ENCODE measurements at regions of chr19 and their contacts with region 1.

Region 1: DNA sequence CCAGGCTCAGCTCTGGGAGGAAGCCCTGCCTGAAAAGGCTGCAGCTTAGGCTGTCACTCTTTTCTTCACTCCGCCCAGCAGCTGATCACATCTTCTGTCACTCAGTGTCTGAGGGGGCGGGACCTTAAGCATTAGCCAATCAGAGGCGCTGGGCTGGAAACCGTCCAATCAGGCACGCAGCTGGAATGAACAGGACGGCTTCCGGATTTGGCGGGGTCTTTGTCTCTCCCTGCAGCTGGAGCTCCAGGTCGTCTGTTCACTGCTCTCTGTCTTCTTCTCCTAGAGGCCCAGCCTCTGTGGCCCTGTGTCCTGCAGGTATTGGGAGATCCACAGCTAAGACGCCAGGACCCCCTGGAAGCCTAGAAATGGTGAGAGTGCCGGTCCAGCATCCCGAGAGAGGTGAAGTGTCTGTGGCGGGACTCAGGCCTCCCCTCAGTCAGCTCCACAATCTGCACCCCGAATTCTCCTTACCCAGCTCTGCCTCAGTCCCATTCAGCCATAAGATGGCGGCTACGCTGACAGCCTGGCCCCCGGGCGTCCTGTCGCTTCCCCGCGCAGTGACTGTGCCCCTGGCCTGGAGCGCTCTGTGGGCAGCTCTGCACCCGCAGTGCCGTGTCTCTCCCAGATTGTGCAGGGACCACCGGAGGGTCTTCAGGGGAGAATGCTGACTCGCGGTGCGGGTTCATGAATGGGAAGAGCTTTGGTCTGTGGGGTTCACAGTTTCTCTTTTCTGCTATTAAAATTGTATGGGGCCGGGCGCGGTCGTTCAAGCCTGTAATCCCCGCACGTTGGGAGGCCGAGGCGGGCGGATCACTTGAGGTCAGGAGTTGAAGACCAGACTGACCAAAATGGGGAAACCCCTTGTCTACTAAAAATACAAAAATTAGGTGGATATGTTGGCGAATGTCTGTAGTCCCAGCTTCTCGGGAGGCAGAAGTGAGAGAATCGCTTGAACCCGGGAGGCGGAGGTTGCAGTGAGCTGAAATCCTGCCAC is at the start of gene ZNF66:
- DNase-seq: peak; percentile 88 to 97 (median 95)
- ATAC-seq: peak; percentile 98
- H3K4me3 ChIP-seq: peak within 1 kb of the TSS; percentile 96 to 99
- H3K4me3 Mint-ChIP-seq: peak within 1 kb of the TSS; percentile 99
- H3K27ac ChIP-seq: peak within 1 kb of the TSS; percentile 86 to 89
- H3K27ac Mint-ChIP-seq: peak within 1 kb of the TSS; percentile 97
- H3K4me1 ChIP-seq: no peaks in the 10 kb centered on the region
- H3K4me1 Mint-ChIP-seq: peaks cover 33% of the 10 kb centered on the region
- H3K27me3 ChIP-seq: no peaks in the 10 kb centered on the region
- H3K27me3 Mint-ChIP-seq: no peaks in the 10 kb centered on the region
- CTCF ChIP-seq: no peak
- total RNA-seq, gene ZNF66: 7.3 to 8.2 TPM

Region 2: GRCh38 chr19:20237761-20238623 is 538.4 kb before region 1 on chr19:
- CTCF ChIA-PET with region 1: no interaction called
- POLR2A ChIA-PET with region 1: interaction called, 3 read pairs
- intact Hi-C with region 1: loop called in 1 of 2 experiments (anchors 5 kb)
- DNase-seq: peak; percentile 74 to 92 (median 86)
- ATAC-seq: peak; percentile 97
- H3K4me3 ChIP-seq: peak overlapping the region; percentile 77 to 87
- H3K4me3 Mint-ChIP-seq: peak overlapping the region; percentile 98
- H3K27ac ChIP-seq: peak overlapping the region; percentile 50 to 56
- H3K27ac Mint-ChIP-seq: peak overlapping the region; percentile 91
- H3K4me1 ChIP-seq: peaks cover 6% of the 10 kb centered on the region
- H3K4me1 Mint-ChIP-seq: peaks cover 10% of the 10 kb centered on the region
- H3K27me3 ChIP-seq: no peaks in the 10 kb centered on the region
- H3K27me3 Mint-ChIP-seq: no peaks in the 10 kb centered on the region
- CTCF ChIP-seq: no peak

Region 3: GRCh38 chr19:20661150-20661819 is 115.1 kb before region 1 on chr19 and contains the start of gene ZNF626:
- CTCF ChIA-PET with region 1: no interaction called
- POLR2A ChIA-PET with region 1: interaction called, 14 read pairs
- intact Hi-C with region 1: loop called (anchors 1 to 5 kb)
- DNase-seq: peak; percentile 78 to 97 (median 90)
- ATAC-seq: peak; percentile 98
- H3K4me3 ChIP-seq: peak within 1 kb of the TSS; percentile 67 to 91
- H3K4me3 Mint-ChIP-seq: peak within 1 kb of the TSS; percentile 94
- H3K27ac ChIP-seq: peak within 1 kb of the TSS; percentile 73 to 91
- H3K27ac Mint-ChIP-seq: peak within 1 kb of the TSS; percentile 97
- H3K4me1 ChIP-seq: peaks cover 12% of the 10 kb centered on the region
- H3K4me1 Mint-ChIP-seq: peaks cover 43% of the 10 kb centered on the region
- H3K27me3 ChIP-seq: no peaks in the 10 kb centered on the region
- H3K27me3 Mint-ChIP-seq: no peaks in the 10 kb centered on the region
- CTCF ChIP-seq: no peak
- total RNA-seq, gene ZNF626: 5.7 to 6.6 TPM

Region 4: DNA sequence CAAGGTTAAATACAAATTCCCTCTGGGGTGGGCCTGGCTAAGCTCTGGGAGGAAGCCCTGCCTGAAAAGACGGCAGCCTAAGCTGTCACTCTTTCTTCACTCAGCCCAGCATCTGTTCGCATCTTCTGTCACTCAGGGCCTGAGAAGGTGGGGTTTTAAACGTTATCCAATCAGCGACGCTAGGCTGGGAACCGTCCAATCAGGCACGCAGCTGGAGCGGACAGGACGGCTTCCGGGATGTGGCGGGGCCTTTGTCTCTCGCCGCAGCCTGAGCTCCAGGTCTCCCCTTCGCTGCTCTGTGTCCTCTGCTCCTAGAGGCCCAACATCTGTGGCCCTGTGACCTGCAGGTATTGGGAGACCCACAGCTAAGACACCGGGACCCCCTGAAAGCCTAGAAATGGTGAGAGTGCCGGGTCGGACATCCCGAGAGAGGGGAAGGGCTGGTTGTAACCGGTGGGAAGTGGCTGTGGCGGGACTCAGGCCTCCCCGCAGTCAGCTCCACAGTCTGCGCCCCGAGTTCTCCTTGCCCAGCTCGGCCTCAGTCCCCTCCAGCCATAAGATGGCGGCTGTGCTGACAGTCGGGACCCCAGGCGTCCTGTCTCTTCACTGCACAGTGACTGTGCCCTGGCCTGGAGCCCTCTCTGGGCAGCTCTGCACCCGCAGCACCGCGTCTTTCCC is 365.5 kb after region 1 on chr19 and contains the start of gene ZNF431:
- CTCF ChIA-PET with region 1: no interaction called
- POLR2A ChIA-PET with region 1: interaction called, 5 read pairs
- intact Hi-C with region 1: loop called (anchors 2 to 5 kb)
- DNase-seq: peak; percentile 79 to 96 (median 88)
- ATAC-seq: peak; percentile 99
- H3K4me3 ChIP-seq: peak within 1 kb of the TSS; percentile 68 to 90
- H3K4me3 Mint-ChIP-seq: peak within 1 kb of the TSS; percentile 97
- H3K27ac ChIP-seq: peak within 1 kb of the TSS; percentile 65 to 85
- H3K27ac Mint-ChIP-seq: peak within 1 kb of the TSS; percentile 97
- H3K4me1 ChIP-seq: peaks cover 9% of the 10 kb centered on the region
- H3K4me1 Mint-ChIP-seq: peaks cover 46% of the 10 kb centered on the region
- H3K27me3 ChIP-seq: no peaks in the 10 kb centered on the region
- H3K27me3 Mint-ChIP-seq: no peaks in the 10 kb centered on the region
- CTCF ChIP-seq: no peak
- total RNA-seq, gene ZNF431: 31.2 to 32.4 TPM

Region 5: GRCh38 chr19:21604351-21604926 is 828.1 kb after region 1 on chr19:
- CTCF ChIA-PET with region 1: no interaction called
- POLR2A ChIA-PET with region 1: no interaction called
- intact Hi-C with region 1: loop called in 1 of 2 experiments (anchors 10 kb)
- DNase-seq: peak in 1 of 9 experiments; percentile 65
- ATAC-seq: peak; percentile 85
- H3K4me3 ChIP-seq: peak overlapping the region; percentile 53 to 61
- H3K4me3 Mint-ChIP-seq: peak overlapping the region; percentile 95
- H3K27ac ChIP-seq: peak overlapping the region; percentile 58 to 64
- H3K27ac Mint-ChIP-seq: peak overlapping the region; percentile 96
- H3K4me1 ChIP-seq: peaks cover 12% of the 10 kb centered on the region
- H3K4me1 Mint-ChIP-seq: peaks cover 30% of the 10 kb centered on the region
- H3K27me3 ChIP-seq: no peaks in the 10 kb centered on the region
- H3K27me3 Mint-ChIP-seq: no peaks in the 10 kb centered on the region
- CTCF ChIP-seq: no peak

Measured in CD8-positive, alpha-beta T cell (primary cell).